ENCODE measurements at regions of chr17 and their contacts with region 1.

Region 1: DNA sequence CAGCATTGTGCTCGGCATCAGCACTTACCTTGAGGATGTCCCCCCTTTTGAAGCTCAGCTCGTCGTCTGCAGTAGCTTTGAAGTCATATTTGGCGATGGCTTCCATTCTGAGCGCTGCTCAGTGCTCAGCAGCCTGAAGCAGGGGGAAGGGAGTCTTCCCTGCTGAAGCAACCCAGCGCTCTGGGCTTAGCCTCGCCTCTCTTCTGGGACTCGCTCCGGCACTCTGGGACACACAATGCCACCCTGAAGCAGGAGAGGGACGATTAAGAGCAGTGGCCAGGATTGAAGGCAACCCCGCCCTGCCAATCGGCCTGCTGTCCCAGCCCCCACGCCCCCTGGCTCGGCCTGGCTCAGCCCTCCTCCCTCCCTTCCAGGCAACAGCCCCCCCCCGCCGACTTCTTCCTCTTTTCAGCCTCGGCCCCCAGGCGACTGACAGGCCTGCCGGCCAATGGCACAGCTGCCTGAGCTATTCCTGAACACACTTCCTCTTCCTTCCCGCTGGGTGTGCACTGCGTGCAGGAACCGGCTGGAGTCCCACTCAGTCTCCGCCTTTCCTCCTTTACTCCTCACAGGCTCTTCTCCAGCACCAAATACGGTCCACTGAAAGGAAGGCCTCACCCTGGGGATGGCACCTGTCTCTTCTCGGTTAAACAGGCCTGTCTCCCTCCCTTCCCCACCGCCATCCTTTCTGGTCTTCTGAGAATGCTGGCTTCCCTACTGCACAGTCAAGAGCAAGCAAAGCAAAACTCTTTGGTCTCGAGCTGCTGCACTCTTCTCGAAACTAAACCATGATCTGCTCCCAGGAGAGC is 11.8 kb downstream of the GRB2 start:
- H3K4me3 ChIP-seq: peak overlapping the region; percentile 61
- H3K27ac ChIP-seq: peak overlapping the region; percentile 84
- H3K4me1 ChIP-seq: peaks cover 43% of the 10 kb centered on the region
- CTCF ChIP-seq: no peak; the same call in 1 of the 2 replicates

Region 2: DNA sequence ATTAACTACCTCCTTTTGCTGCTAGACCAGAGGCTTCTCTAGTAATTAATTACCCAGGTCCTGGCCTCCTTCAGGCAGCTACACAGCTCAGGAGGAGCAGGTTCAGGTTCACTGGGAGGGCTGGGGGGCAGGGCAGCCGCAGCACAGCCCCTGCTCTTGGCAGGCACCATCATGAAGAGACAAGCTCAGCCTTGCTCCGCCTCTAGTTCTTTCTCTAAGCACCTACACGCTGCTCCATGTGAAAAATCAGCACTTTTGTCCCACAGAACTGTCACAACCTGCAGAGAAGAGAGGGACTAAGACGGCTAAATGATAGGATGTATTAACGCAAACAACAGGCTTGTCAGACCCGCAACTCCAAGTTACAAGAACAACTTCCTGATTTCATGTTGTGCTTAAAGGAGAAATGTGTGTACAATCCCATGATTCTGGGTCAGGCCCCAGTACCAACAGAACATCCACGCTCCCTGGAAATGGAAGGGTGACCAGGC is 41.6 kb before region 1 on chr17:
- CTCF ChIA-PET with region 1: no interaction called
- POLR2A ChIA-PET with region 1: interaction called, 14 read pairs
- H3K4me3 ChIP-seq: no peak overlapping the region
- H3K27ac ChIP-seq: peak overlapping the region; percentile 50
- H3K4me1 ChIP-seq: peaks cover 17% of the 10 kb centered on the region
- CTCF ChIP-seq: no peak

Region 3: DNA sequence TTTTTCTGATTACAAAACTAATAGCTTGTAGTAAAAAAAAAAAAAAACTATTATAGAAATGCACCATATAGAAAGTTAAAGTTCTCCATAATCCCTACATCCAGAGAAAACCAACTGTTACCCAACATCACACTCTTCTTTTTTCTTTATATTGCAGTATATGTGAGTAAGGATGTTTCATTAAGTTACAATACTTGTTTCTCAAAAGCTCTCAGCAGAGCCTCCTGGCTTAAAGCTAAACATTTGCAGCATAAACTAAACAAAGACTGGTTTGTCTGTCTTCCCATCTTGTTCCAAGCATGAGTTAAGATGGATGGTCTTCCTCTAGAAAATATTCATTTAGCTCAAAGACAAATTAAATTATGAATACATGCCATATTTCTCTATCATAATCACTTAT is 13.4 kb before region 1 on chr17:
- CTCF ChIA-PET with region 1: interaction called, 16 read pairs
- POLR2A ChIA-PET with region 1: interaction called, 11 read pairs
- H3K4me3 ChIP-seq: no peak overlapping the region
- H3K27ac ChIP-seq: no peak overlapping the region
- H3K4me1 ChIP-seq: peaks cover 7% of the 10 kb centered on the region
- CTCF ChIP-seq: no peak

Region 4: DNA sequence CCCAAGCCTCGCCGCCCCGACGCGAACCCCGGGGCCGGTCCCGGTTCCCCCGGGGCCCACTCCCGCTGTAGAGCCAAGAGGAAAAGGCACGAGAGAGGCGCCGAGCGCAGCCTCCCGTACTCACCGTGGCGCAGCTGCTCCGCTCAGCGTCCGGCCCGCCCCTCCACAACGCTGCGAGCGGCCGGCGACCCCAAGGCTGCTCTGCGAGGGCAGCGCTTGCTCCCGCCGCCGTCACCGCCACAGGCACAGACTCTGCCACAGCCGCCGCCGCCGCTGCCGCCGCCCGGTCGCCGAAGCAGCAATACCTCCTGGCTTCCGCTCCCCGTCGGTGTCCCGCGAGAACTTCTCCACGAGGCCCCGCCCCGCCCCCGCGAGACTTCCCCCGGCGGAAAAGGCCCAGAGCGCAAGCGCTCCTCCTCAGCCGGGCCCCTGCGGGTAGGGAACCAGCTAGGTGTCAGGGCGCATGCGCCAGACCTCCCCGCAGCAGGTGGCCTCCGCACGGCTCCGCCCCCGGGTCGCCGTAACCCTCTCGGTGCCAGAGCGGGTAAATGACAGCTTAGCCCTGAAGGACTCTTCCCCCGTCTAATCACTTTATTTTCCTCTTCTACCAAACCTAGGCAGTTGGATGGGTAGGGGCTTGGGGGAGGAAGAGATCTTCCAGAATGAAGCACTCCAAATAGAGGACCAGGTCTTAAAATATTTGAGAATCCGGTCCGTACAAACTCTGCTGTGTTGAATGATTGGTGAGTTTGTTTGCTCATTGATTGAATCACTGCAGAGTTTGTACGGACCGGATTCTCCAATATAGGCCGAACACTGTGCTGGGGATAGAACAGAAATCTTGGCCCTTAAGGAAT is 11.9 kb after region 1 on chr17 and contains the start of gene GRB2:
- CTCF ChIA-PET with region 1: interaction called, 7 read pairs
- POLR2A ChIA-PET with region 1: interaction called, 52 read pairs
- H3K4me3 ChIP-seq: peak within 1 kb of the TSS; percentile 96
- H3K27ac ChIP-seq: peak within 1 kb of the TSS; percentile 94
- H3K4me1 ChIP-seq: 0 out of 2 replicates have a peak, but pooled peaks cover 8% of the 10 kb centered on the region
- CTCF ChIP-seq: no peak

Region 5: DNA sequence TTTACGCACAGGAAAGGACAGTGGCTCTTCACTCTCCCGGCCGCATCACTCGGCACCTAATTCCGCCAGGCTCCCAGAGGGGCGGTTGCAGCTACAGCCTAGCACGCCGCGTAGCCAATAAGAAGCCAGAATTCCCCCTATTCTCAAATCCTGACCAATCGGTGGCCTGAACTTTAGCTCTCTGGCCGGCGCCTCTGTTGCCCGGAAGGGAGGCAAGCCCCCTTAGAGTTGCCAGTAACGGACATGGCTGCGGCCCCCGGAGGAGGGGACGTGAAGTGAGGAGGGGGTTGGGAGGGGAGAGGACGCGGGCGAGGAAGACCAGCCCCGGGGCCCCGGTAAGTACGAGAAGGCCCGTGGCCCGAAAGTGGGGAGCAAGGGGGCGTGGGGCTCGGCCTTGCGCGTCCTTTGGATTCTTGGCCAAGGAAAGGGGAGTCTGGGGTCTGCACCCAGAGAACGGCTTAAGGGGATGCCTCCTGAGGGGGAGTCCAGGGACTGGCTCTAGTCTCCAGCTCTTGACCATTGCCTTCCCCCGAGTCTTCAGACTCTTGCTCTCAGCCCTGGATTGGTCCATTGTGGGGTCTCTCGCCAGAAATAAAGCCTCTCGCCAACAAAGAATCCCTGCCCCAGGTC is 62.8 kb after region 1 on chr17 and contains the start of gene TMEM94:
- CTCF ChIA-PET with region 1: no interaction called
- POLR2A ChIA-PET with region 1: interaction called, 11 read pairs
- H3K4me3 ChIP-seq: peak within 1 kb of the TSS; percentile 64
- H3K27ac ChIP-seq: peak within 1 kb of the TSS; percentile 84
- H3K4me1 ChIP-seq: peaks cover 20% of the 10 kb centered on the region
- CTCF ChIP-seq: no peak